HEK293 (cell line): ENCODE measurements at regions of chr15 and their contacts with region 1.

Region 1: DNA sequence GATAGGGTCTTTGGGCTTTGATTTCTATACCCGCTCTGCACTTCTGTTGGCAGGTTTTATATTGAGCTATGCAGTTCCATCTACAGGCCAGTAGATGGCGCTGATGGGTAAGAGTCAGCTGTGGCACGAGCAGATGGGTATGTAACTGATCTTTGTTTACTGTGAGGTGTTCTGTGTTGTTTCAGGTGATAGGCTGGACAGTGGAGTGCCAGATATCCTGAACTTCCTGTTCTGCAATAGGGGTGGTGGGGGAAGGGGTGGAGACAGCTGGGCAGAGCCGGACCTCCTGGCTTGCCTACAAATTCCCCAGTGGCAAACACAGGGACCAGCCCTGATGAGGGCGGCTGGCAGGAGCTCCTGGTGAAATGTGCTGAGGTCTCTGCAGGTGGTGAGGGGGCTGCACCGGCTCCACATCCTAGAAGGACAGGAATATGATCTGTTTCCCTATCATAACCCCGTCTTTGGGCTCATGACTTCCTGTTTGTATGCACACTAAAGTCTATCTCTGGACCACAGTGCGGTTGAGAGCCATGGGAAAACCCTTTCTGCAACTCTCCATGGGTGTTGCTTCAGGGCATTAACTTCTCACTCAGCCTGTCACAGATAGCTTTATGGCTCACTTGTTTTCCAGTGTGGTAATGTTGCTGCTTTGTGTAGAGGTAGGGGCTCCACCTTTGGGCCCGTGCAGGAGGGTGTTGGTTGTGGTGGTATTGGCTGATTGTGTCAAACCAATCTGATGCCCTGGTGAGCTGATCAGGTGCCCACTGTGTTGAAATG is 13.4 kb upstream of the FAM98B start:
- H3K4me3 ChIP-seq: no peak overlapping the region
- H3K27ac ChIP-seq: no peak overlapping the region
- H3K4me1 ChIP-seq: no peaks in the 10 kb centered on the region
- CTCF ChIP-seq: peak; percentile 40; the same call in 1 of the 2 replicates

Region 2: GRCh38 chr15:38002883-38003477 is 437.6 kb before region 1 on chr15:
- CTCF ChIA-PET with region 1: interaction called, 13 read pairs
- POLR2A ChIA-PET with region 1: no interaction called
- H3K4me3 ChIP-seq: no peak overlapping the region
- H3K27ac ChIP-seq: no peak overlapping the region
- H3K4me1 ChIP-seq: no peaks in the 10 kb centered on the region
- CTCF ChIP-seq: peak; percentile 57

Region 3: DNA sequence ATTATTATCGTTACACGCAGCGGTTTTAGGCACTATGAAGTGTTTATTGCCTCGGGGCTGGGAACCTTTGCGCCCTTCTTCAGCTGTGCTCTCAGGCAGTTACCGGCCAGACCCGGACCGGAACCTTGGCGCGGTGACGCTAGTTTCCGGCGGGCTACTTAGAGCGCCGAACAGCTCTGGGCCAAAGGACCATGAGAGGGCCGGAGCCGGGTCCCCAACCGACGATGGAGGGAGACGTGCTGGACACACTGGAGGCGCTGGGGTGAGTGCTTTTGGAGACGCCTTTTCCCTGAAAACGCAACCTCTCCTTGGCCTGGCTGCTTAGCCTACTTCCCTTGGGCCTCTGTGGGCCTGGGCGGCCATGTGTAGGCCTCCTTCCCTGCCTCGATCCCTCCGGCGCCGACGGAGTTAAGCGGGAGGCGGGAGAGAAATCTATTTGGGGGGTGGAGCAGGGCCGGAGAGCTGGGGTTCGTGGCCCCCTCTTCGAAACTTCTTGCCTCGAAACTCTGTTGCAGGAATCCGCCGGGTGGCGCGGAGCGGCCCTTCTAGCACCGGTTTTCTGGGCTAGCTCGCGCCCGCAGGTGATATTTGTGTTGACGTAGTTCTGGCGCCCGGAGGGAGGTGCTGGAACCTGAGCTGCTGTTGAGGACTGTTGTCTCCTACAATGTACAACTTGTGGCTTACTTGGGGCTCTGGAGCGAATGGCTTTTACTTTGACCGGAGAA is 13.6 kb after region 1 on chr15 and contains the start of gene FAM98B:
- CTCF ChIA-PET with region 1: interaction called, 17 read pairs
- POLR2A ChIA-PET with region 1: interaction called, 8 read pairs
- H3K4me3 ChIP-seq: peak within 1 kb of the TSS; percentile 97
- H3K27ac ChIP-seq: peak within 1 kb of the TSS; percentile 93
- H3K4me1 ChIP-seq: peaks cover 4% of the 10 kb centered on the region; the same call in 1 of the 2 replicates
- CTCF ChIP-seq: peak; percentile 62; the same call in 1 of the 2 replicates

Region 4: DNA sequence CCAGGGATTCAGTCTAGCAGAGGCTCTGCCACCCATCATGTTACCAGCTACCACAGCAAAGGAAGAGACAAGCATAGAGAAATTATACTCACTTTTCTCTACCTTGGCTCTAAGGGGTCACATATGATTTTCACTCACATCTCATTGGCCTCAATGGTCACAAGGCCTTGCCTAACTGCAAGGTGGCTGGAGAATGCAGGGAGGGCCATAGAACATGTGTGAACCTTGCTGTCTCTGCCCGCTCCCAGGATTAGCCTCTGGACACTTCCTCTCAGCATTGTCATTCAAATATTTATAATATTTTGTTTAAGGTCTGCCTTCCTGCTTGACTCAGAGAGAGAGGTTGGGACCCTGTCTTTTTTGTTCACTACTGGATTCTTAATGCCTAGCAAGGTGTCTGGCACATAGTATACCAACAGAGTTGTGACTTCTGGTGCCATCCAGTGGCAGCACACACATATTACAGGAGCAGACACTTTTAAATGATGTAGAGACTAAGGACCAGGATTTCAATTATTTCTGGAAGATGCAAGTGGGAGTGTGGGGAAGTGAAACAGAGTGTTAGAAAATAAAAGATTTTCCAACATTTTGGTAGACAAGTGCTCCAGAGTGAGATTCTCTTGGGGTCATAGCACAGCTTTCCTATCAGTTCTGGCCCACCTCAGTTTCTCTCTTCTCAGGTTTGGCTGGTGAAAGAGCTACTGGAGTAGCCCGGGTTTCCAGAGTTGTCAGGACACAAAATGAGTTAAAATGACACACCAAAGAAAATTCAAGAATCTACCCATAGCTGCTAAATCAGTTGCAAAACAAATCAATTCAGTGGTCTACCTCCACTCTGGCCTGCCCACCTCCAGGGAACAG is 243.1 kb after region 1 on chr15:
- CTCF ChIA-PET with region 1: interaction called, 24 read pairs
- POLR2A ChIA-PET with region 1: no interaction called
- H3K4me3 ChIP-seq: no peak overlapping the region
- H3K27ac ChIP-seq: no peak overlapping the region
- H3K4me1 ChIP-seq: no peaks in the 10 kb centered on the region
- CTCF ChIP-seq: peak; percentile 29; the same call in 1 of the 2 replicates

Region 5: GRCh38 chr15:38690689-38691332 is 250.3 kb after region 1 on chr15:
- CTCF ChIA-PET with region 1: interaction called, 24 read pairs
- POLR2A ChIA-PET with region 1: no interaction called
- H3K4me3 ChIP-seq: no peak overlapping the region
- H3K27ac ChIP-seq: no peak overlapping the region
- H3K4me1 ChIP-seq: no peaks in the 10 kb centered on the region
- CTCF ChIP-seq: no peak

Region 6: DNA sequence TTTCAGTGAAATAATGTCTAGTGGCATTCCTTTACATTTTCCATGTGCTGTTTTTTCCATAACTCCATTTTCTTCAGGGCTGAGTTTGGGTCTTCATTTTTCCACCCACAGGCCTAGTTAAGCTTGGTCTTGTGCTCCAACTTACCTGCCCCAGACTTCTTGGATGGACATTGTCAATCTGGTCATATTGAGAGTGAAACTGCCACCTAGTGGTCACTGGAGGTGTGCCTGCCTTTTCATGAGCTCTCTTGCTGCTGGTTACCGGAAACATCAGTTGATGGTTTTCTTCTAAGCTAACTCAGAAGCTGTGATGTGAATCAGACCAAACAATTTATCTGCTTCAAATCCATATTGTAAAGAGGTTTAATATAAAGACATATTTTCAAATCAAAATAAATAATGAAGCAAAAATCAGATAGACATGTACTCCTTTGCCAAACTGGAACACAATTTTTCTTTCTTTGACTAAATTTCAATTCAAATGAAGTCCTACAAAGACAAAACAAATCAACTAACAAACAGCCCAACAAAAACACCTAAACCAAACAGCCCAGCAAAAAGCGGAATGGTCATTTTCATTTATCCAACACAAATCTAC is 259.2 kb after region 1 on chr15:
- CTCF ChIA-PET with region 1: interaction called, 23 read pairs
- POLR2A ChIA-PET with region 1: no interaction called
- H3K4me3 ChIP-seq: no peak overlapping the region
- H3K27ac ChIP-seq: no peak overlapping the region
- H3K4me1 ChIP-seq: peaks cover 2% of the 10 kb centered on the region; the same call in 1 of the 2 replicates
- CTCF ChIP-seq: no peak